Gastrocnemius medialis (tissue), 4 donors: ENCODE measurements at regions of chr21 and their contacts with region 1.

Region 1: DNA sequence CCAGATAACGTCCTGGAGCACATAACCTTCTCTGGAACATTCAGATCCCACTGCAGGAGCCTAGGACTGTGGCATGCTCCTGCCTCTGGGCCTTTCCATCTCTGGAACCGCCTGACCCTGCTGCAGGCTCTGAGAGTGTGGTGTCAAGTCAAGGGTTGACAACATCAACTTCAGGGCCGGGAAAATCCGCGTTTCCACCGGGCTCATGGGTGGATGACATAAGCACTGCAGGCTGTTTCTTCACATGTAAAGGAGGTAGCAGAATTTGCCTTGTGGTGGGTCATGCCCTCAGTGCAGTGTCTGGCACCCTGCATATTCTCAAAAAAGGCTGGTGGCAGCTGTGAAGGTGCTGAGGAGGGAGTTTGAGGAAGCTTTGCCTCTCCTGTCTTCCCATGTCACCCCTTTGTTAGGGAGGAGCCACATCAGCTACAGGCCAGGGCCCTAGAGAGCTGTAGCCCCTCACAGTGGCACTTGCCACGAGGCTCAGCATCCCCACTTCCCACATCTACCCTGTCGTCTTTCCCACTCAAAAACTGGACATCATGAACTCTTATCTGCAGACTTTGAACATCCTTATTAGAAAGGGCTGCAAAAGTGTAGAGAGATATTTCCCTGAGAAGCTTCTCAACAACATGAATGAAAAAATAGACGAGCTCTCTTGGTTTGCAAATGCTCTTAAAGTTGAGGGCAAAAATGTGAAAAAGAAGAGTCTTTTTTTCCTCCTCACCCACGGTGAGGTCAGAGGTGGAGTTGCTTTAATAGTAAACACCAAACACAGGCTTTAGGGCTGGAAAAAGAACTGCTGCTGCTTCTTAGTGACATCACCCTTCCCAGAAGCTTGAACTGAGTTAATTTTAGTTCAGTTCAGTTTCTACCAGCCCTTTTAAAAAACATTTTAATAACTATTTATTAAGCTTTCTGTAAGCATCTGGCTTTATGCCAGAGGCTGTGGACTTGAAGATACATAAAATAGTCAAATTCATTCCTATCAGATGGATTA is 121.3 kb downstream of the HUNK start:
- DNase-seq: no peak
- ATAC-seq: no peak
- H3K4me3 ChIP-seq: no peak overlapping the region
- H3K27ac ChIP-seq: no peak overlapping the region
- H3K4me1 ChIP-seq: no peaks in the 10 kb centered on the region
- H3K27me3 ChIP-seq: no peaks in the 10 kb centered on the region
- CTCF ChIP-seq: no peak
- POLR2A ChIP-seq: no peak

Region 2: DNA sequence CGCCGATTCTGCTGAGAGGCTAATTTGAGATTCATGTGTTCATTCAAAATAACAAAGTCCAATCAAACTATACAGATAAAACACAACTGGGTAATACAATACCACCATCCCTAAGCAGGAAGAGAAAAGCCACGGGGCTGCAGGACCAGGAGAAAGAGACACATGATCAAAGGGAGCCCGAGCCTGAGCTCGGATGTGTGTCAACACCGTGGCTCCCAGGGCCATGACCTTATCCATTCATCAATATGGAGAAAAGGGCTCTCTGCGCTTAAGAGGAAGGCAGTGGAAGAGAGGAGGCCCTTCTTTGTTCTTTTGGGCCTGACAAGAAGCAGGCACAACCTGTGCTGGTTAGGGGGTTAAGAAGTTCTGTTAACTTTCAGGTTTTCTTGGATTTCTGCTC is 64.6 kb before region 1 on chr21:
- in situ Hi-C with region 1: no loop called
- intact Hi-C with region 1: loop called (anchors 2 kb)
- DNase-seq: no peak
- ATAC-seq: no peak
- H3K4me3 ChIP-seq: no peak overlapping the region
- H3K27ac ChIP-seq: no peak overlapping the region
- H3K4me1 ChIP-seq: no peaks in the 10 kb centered on the region
- H3K27me3 ChIP-seq: no peaks in the 10 kb centered on the region
- CTCF ChIP-seq: no peak
- POLR2A ChIP-seq: no peak